MCF 10A (cell line): ENCODE measurements at regions of chr1 and their contacts with region 1.

Region 1: GRCh38 chr1:208036109-208036808 is 125.3 kb upstream of the CD34 start:
- DNase-seq: peak; percentile 56
- H3K4me3 Mint-ChIP-seq: no peak overlapping the region
- H3K27ac Mint-ChIP-seq: peak overlapping the region; percentile 16
- H3K4me1 Mint-ChIP-seq: no peaks in the 10 kb centered on the region
- H3K27me3 Mint-ChIP-seq: no peaks in the 10 kb centered on the region
- CTCF ChIP-seq: peak; percentile 51

Region 2: GRCh38 chr1:207828485-207829158 is 207.6 kb before region 1 on chr1:
- CTCF ChIA-PET with region 1: no interaction called
- POLR2A ChIA-PET with region 1: no interaction called
- intact Hi-C with region 1: no loop called
- DNase-seq: peak; percentile 96
- H3K4me3 Mint-ChIP-seq: no peak overlapping the region
- H3K27ac Mint-ChIP-seq: peak overlapping the region; percentile 96
- H3K4me1 Mint-ChIP-seq: peaks cover 78% of the 10 kb centered on the region
- H3K27me3 Mint-ChIP-seq: no peaks in the 10 kb centered on the region
- CTCF ChIP-seq: peak; percentile 99

Region 3: GRCh38 chr1:208047476-208047934 is 11.2 kb after region 1 on chr1:
- CTCF ChIA-PET with region 1: interaction called, 12 read pairs
- POLR2A ChIA-PET with region 1: interaction called, 3 read pairs
- intact Hi-C with region 1: no loop called
- DNase-seq: peak; percentile 12
- H3K4me3 Mint-ChIP-seq: no peak overlapping the region
- H3K27ac Mint-ChIP-seq: peak overlapping the region; percentile 41
- H3K4me1 Mint-ChIP-seq: peaks cover 12% of the 10 kb centered on the region
- H3K27me3 Mint-ChIP-seq: no peaks in the 10 kb centered on the region
- CTCF ChIP-seq: no peak